SK-N-SH (cell line): ENCODE measurements at regions of chr5 and their contacts with region 1.

Region 1: DNA sequence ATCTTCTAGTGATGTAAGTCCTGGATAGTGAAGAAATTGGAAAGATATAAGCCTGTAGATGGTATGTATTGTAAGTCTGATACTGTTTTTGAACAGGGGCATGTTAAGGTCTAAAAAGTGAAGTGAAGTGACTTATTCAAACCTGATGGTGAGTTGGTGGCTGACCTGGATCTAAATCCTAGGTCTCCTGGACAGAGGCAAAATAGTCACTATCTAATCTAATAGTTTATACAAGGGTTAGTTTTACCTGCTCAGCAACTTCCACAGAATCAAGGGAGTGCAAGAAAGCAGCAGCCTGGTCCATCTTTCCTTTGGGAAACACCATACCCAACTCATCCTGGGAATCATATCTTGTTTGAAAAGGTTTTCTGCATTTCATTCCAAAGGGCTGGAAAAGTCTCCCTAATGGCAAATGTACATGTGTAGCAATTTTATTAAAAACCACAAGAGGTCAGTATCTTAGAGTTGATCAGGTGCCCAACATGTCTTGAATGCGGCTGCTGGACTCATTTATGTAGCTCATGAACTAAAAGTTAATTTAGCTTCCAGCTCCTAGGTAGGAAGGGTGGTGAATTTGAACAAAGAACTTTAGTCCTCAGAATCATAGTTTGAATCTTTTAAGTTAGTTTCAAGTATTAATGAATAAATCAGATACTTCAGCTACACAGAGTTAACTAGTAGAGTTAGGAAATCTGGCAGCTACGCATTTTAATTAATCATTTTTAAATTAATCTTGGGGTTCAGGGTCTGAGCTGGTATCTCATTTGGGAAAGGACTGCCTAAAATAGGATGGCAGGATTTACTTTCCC is 26.0 kb downstream of the SKP2 start:
- DNase-seq: peak; percentile 32
- H3K4me3 ChIP-seq: no peak overlapping the region
- H3K27ac ChIP-seq: no peak overlapping the region
- H3K4me1 ChIP-seq: no peaks in the 10 kb centered on the region
- H3K27me3 ChIP-seq: no peaks in the 10 kb centered on the region
- CTCF ChIP-seq: peak; percentile 68
- EP300 ChIP-seq: no peak
- RAD21 ChIP-seq: peak; percentile 76

Region 2: DNA sequence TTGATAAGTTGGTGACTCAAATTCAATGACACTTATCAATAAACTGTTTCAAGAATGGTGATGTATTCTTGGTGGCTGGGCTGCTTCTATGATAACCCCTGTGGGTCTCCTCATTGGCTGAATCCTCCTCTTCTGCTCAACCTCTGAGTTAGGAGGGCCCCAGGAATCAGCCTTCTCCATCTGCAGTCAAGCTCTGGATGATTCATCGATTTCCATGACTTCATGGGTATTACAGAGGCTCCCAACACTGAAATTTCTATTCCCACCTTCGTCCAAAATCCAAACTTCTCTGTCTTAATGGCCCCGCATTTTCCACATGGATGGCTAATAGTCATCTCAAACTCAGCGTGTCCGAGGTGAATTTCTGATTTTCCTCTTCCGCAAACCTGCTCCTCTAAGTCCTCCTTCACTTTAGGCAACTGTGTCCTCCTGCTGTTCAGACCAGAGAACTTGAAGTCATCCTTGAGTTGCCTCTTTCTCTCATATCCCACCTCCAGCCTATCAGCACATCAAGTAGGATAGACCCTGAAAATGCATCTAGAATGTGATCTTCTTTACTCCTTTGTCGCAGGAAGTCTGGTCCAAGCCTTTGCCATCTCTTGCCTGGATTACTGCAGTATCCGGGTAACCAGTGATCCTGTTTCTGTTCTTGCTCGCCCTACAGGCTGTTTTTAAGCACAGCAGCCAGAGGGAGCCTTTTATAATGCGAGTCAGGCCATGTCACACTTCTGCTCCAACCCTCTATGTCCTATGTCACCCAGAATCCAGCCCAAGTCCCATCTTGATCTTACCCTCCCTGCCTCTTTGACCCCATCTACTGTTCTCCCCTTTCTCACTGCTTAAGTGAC is 362.6 kb before region 1 on chr5:
- CTCF ChIA-PET with region 1: no interaction called
- POLR2A ChIA-PET with region 1: no interaction called
- DNase-seq: peak; percentile 27
- H3K4me3 ChIP-seq: no peak overlapping the region; a peak in 1 of 4 replicates
- H3K27ac ChIP-seq: no peak overlapping the region
- H3K4me1 ChIP-seq: no peaks in the 10 kb centered on the region
- H3K27me3 ChIP-seq: no peaks in the 10 kb centered on the region
- CTCF ChIP-seq: peak; percentile 63
- EP300 ChIP-seq: no peak
- RAD21 ChIP-seq: peak; percentile 41

Region 3: GRCh38 chr5:36079200-36079761 is 98.6 kb before region 1 on chr5:
- CTCF ChIA-PET with region 1: interaction called, 14 read pairs
- POLR2A ChIA-PET with region 1: no interaction called
- DNase-seq: peak; percentile 75
- H3K4me3 ChIP-seq: no peak overlapping the region
- H3K27ac ChIP-seq: no peak overlapping the region
- H3K4me1 ChIP-seq: peaks cover 0 to 4% of the 10 kb centered on the region in 2 experiments; a peak in 2 of 4 replicates
- H3K27me3 ChIP-seq: no peaks in the 10 kb centered on the region; the same call in 1 of the 2 replicates
- CTCF ChIP-seq: peak; percentile 70
- EP300 ChIP-seq: no peak
- RAD21 ChIP-seq: peak; percentile 80

Region 4: GRCh38 chr5:36158144-36158543 is 19.8 kb before region 1 on chr5:
- CTCF ChIA-PET with region 1: interaction called, 17 read pairs
- POLR2A ChIA-PET with region 1: no interaction called
- DNase-seq: peak; percentile 76
- H3K4me3 ChIP-seq: peak overlapping the region in 1 of 2 experiments; percentile 1; a peak in 1 of 4 replicates
- H3K27ac ChIP-seq: peak overlapping the region; percentile 50 to 99; a peak in 3 of 4 replicates
- H3K4me1 ChIP-seq: peaks cover 46 to 63% of the 10 kb centered on the region in 2 experiments
- H3K27me3 ChIP-seq: no peaks in the 10 kb centered on the region
- CTCF ChIP-seq: no peak
- EP300 ChIP-seq: peak; percentile 51 to 98; a peak in 3 of 4 replicates
- RAD21 ChIP-seq: peak; percentile 40; the same call in 1 of the 2 replicates

Region 5: DNA sequence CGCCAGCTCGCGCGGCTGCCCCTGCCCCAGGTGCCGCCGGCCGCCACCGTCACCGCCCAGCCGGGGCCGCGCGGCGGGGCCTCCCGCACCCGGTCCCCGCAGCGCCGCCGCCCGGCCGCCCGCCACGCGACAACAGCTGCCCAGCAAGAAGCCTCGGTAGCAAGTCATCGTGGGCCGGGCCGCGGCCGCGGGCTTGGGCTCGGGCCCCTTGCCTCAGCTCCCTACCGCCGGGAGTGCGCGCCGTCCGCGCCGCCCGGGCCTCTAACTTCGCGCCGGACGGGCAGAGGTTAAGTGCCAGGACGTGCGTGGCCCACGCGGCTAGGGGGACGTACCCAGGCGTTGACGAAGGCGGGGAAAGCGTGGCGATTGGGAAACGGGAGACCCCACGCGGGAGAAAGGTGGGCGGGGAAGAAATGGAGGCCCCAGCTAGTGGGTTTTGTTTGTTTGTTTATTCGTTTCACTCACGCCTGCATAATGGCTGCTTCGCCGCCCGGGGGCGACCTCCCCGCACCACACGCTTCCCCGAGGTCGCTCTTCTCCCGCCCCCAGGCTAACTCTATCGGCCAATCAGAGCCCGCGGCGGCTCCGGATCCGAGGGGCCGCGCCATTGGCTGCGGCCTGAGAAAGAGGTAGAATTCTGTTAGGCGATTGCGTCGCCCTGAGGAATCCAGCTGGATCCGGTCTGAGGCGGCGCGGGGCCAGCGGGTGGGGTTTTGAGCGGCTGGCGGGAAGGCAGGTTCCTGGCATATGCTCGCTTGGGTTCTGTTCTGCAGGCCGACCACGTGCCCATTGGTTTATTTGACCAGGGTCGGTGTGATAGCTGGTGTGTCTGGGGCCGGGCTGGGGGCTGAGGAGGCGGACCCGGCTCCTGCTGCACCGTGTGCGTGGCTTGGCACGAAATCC is 64.0 kb after region 1 on chr5 and contains the start of gene NADK2:
- CTCF ChIA-PET with region 1: interaction called, 17 read pairs
- POLR2A ChIA-PET with region 1: interaction called, 3 read pairs
- DNase-seq: peak; percentile 92
- H3K4me3 ChIP-seq: peak within 1 kb of the TSS; percentile 87 to 89
- H3K27ac ChIP-seq: peak within 1 kb of the TSS; percentile 90 to 92
- H3K4me1 ChIP-seq: peaks cover 21 to 28% of the 10 kb centered on the region in 2 experiments
- H3K27me3 ChIP-seq: no peaks in the 10 kb centered on the region
- CTCF ChIP-seq: peak; percentile 64
- EP300 ChIP-seq: peak in 1 of 2 experiments; percentile 49; a peak in 2 of 4 replicates
- RAD21 ChIP-seq: peak; percentile 35; the same call in 1 of the 2 replicates
- polyA plus RNA-seq, gene NADK2: 7.6 and 9.7 TPM in 2 replicates

Region 6: GRCh38 chr5:36690041-36690961 is 512.4 kb after region 1 on chr5:
- CTCF ChIA-PET with region 1: interaction called, 14 read pairs
- POLR2A ChIA-PET with region 1: no interaction called
- DNase-seq: peak; percentile 91
- H3K4me3 ChIP-seq: peak overlapping the region; percentile 56 to 67
- H3K27ac ChIP-seq: no peak overlapping the region
- H3K4me1 ChIP-seq: peaks cover 0 to 3% of the 10 kb centered on the region in 2 experiments; a peak in 1 of 4 replicates
- H3K27me3 ChIP-seq: peaks cover 7% of the 10 kb centered on the region; the same call in 1 of the 2 replicates
- CTCF ChIP-seq: peak; percentile 72
- EP300 ChIP-seq: no peak
- RAD21 ChIP-seq: peak; percentile 48